ENCODE measurements at regions of chr3 and their contacts with region 1.

Region 1: DNA sequence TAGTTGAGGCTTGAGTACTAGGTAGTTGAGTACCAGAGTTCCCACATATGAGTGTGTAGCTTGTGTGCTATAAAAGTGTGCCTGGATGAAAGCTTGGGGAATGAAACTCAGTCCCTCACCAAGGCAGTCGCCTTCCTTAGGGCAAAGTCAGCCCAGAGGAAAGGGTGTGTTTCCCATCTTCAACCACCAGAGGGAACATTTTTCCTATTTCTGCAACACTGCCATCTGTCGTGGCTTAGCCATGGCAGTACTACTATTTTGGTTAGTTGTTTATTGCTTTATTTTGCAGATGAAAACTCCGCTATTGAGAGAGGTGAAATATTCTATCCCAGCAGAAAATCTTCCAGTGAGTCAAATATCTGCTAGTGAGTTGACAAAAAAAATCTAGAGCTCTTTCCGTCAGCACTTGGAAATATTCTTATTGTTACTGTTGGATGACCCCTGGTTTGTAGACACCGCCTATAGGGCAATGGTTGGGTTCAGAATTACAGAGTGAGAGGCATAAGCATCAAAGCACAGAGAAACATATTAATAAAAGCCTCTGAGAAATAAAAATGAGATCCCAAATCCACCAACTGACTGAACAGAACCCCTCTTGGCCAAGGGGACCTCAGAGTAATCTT is 239.9 kb downstream of the CPNE4 start:
- DNase-seq: peak; percentile 39
- ATAC-seq: peak; percentile 93
- H3K4me3 ChIP-seq: no peak overlapping the region
- H3K27ac ChIP-seq: no peak overlapping the region
- H3K4me1 ChIP-seq: no peaks in the 10 kb centered on the region
- H3K27me3 ChIP-seq: peaks cover 12% of the 10 kb centered on the region; the same call in 1 of the 2 replicates
- CTCF ChIP-seq: peak; percentile 78 to 97 (median 83)
- POLR2A ChIP-seq: no peak
- RAD21 ChIP-seq: peak; percentile 69

Region 2: GRCh38 chr3:132180337-132180791 is 385.5 kb after region 1 on chr3:
- CTCF ChIA-PET with region 1: no interaction called
- POLR2A ChIA-PET with region 1: no interaction called
- RAD21 ChIA-PET with region 1: no interaction called
- intact Hi-C with region 1: loop called (anchors 5 kb)
- DNase-seq: peak; percentile 34
- ATAC-seq: peak; percentile 90
- H3K4me3 ChIP-seq: no peak overlapping the region
- H3K27ac ChIP-seq: no peak overlapping the region
- H3K4me1 ChIP-seq: no peaks in the 10 kb centered on the region
- H3K27me3 ChIP-seq: peaks cover 49% of the 10 kb centered on the region
- CTCF ChIP-seq: peak; percentile 49 to 66 (median 54)
- POLR2A ChIP-seq: no peak
- RAD21 ChIP-seq: peak; percentile 64